Lower lobe of right lung (tissue), 2 donors: ENCODE measurements at regions of chr3 and their contacts with region 1.

Region 1: DNA sequence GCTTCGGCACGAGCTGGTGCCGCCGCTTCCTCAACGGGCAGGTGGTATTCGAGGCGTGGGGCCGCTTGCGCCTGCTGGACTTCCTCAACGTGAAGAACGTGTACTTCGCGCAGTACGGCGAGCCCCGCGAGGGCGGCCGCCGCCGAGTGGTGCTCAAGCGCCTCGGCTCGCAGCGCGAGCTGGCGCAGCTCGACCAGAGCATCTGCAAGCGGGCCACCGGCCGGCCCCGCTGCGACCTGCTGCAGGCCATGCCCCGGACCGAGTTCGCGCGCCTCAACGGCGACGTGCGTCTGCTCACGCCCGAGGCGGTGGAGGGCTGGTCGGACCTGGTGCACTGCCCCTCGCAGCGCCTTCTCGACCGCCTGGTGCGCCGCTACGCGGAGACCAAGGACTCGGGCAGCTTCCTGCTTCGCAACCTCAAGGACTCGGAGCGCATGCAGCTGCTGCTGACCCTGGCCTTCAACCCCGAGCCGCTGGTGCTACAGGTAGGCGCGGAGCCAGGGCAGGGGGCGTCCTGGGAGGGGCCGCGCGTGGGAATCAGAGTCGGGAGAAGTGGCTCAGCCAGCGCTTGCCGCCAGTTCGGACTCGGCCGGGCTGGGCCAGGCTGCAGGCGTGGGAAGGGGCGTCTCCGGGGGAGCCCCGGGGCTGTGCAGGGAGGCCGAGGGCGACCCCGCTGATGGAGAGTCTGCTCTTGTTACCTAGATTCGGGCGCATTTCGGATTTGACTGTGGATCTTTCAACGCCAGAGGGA is 1.1 kb downstream of the DIPK2A start:
- DNase-seq: peak; percentile 95
- ATAC-seq: peak; percentile 63 to 79
- H3K4me3 ChIP-seq: peak overlapping the region; percentile 93
- H3K27ac ChIP-seq: peak overlapping the region; percentile 98
- H3K4me1 ChIP-seq: peaks cover 35% of the 10 kb centered on the region
- H3K27me3 ChIP-seq: no peaks in the 10 kb centered on the region
- CTCF ChIP-seq: peak; percentile 44

Region 2: GRCh38 chr3:143855183-143855582 is 117.5 kb before region 1 on chr3:
- intact Hi-C with region 1: no loop called
- DNase-seq: no peak
- ATAC-seq: no peak
- H3K4me3 ChIP-seq: no peak overlapping the region
- H3K27ac ChIP-seq: no peak overlapping the region
- H3K4me1 ChIP-seq: no peaks in the 10 kb centered on the region
- H3K27me3 ChIP-seq: no peaks in the 10 kb centered on the region
- CTCF ChIP-seq: no peak

Region 3: DNA sequence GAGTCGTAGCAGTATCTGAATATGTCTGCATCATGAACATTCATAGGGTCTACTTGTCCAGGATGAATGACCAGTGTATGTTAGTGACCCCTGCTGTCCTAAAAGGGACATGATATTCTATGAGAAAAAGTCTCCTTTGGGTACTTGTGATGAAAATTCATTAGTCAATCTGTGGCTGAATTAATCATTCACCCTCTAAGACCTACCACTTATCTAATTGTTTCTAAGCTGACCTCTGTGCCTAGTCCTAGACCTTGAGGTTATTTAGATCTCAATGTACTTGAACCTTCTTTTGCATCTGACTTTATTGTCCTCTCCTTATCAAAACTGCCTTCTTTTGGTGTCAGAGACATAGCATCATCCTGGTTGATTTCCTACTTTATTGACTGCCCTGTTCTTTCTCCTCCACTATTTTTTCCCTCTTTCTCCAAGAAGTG is 798.3 kb after region 1 on chr3:
- intact Hi-C with region 1: loop called (anchors 10 kb)
- DNase-seq: no peak
- ATAC-seq: peak; percentile 61 to 74
- H3K4me3 ChIP-seq: no peak overlapping the region
- H3K27ac ChIP-seq: no peak overlapping the region
- H3K4me1 ChIP-seq: no peaks in the 10 kb centered on the region
- H3K27me3 ChIP-seq: no peaks in the 10 kb centered on the region
- CTCF ChIP-seq: peak; percentile 43